ENCODE measurements at regions of chr5 and their contacts with region 1.

Region 1: GRCh38 chr5:139968547-139969261 is 74.4 kb downstream of the NRG2 start:
- DNase-seq: peak; percentile 88 to 91 (median 90)
- ATAC-seq: peak; percentile 100
- H3K4me3 ChIP-seq: no peak overlapping the region
- H3K27ac ChIP-seq: no peak overlapping the region
- H3K4me1 ChIP-seq: peaks cover 0 to 10% of the 10 kb centered on the region in 2 experiments; a peak in 1 of 5 replicates
- H3K27me3 ChIP-seq: peaks cover 0 to 30% of the 10 kb centered on the region in 2 experiments; a peak in 4 of 5 replicates
- CTCF ChIP-seq: peak; percentile 100
- EP300 ChIP-seq: no peak
- POLR2A ChIP-seq: no peak
- RAD21 ChIP-seq: peak; percentile 97 to 99

Region 2: GRCh38 chr5:139774980-139775661 is 193.6 kb before region 1 on chr5:
- CTCF ChIA-PET with region 1: interaction called, 12 read pairs
- POLR2A ChIA-PET with region 1: interaction called, 4 read pairs
- in situ Hi-C with region 1: no loop called
- intact Hi-C with region 1: no loop called
- DNase-seq: peak; percentile 88 to 94 (median 92)
- ATAC-seq: peak; percentile 98
- H3K4me3 ChIP-seq: no peak overlapping the region
- H3K27ac ChIP-seq: no peak overlapping the region
- H3K4me1 ChIP-seq: peaks cover 4 to 14% of the 10 kb centered on the region in 2 experiments; a peak in 4 of 5 replicates
- H3K27me3 ChIP-seq: peaks cover 2 to 17% of the 10 kb centered on the region in 2 experiments; a peak in 3 of 5 replicates
- CTCF ChIP-seq: peak; percentile 96 to 99 (median 98)
- EP300 ChIP-seq: 0 out of 2 replicates have a peak, but pooled peaks have one; percentile 22
- POLR2A ChIP-seq: no peak
- RAD21 ChIP-seq: peak; percentile 53 to 76

Region 3: DNA sequence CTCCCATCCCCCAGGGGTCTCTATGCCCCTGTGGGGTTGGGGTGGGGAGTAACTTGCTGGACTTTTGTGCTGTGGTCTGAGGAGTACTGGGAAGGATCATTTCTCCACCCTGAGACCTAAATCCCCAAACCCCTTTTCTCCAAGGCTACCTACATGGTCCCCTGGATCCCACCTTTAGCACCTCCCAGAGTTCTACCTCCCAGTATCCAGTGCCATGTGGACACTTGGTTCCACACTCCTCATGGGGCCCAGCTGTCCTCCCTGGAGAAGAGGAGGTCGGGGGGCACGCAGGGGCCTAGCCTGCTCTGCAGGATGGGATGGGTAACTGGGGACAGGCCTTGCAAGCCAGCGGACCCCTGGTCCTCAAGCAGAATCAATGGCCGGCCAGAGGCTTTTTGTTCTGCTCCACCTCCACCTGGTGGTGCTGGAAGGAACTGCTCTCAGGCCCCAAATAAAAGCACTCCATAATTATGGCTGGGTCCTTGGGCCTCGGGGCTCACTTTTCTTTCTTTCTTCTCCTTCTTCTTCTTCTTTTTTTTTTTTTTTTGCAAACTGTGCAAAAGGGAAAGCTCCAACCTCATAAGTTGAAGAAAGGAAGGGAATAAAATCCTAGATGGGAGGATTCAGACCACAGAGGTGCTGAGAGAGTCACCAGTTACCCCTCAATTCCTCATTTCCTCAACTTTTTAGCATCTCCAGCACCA is 104.7 kb before region 1 on chr5:
- CTCF ChIA-PET with region 1: interaction called, 7 read pairs
- POLR2A ChIA-PET with region 1: no interaction called
- in situ Hi-C with region 1: no loop called
- intact Hi-C with region 1: loop called (anchors 2 kb)
- DNase-seq: peak; percentile 69 to 77 (median 74)
- ATAC-seq: peak; percentile 91
- H3K4me3 ChIP-seq: no peak overlapping the region
- H3K27ac ChIP-seq: no peak overlapping the region
- H3K4me1 ChIP-seq: no peaks in the 10 kb centered on the region
- H3K27me3 ChIP-seq: peaks cover 0 to 29% of the 10 kb centered on the region in 2 experiments; a peak in 3 of 5 replicates
- CTCF ChIP-seq: peak; percentile 85 to 88 (median 86)
- EP300 ChIP-seq: no peak
- POLR2A ChIP-seq: no peak
- RAD21 ChIP-seq: peak; percentile 50 to 79

Region 4: GRCh38 chr5:139872052-139872766 is 96.5 kb before region 1 on chr5:
- CTCF ChIA-PET with region 1: interaction called, 11 read pairs
- POLR2A ChIA-PET with region 1: interaction called, 3 read pairs
- in situ Hi-C with region 1: no loop called
- intact Hi-C with region 1: no loop called
- DNase-seq: peak in 2 of 4 experiments; percentile 15 to 33
- ATAC-seq: peak; percentile 62
- H3K4me3 ChIP-seq: no peak overlapping the region
- H3K27ac ChIP-seq: no peak overlapping the region
- H3K4me1 ChIP-seq: no peaks in the 10 kb centered on the region
- H3K27me3 ChIP-seq: peaks cover 6 to 25% of the 10 kb centered on the region in 2 experiments; a peak in 2 of 5 replicates
- CTCF ChIP-seq: peak; percentile 22 to 41 (median 23); a peak in 5 of 6 replicates
- EP300 ChIP-seq: no peak
- POLR2A ChIP-seq: no peak
- RAD21 ChIP-seq: 0 out of 4 replicates have a peak, but pooled peaks of 1 of the 2 experiments have one; percentile 20

Region 5: GRCh38 chr5:140157032-140157803 is 188.5 kb after region 1 on chr5:
- CTCF ChIA-PET with region 1: interaction called, 6 read pairs
- POLR2A ChIA-PET with region 1: no interaction called
- in situ Hi-C with region 1: no loop called
- intact Hi-C with region 1: loop called (anchors 2 kb)
- DNase-seq: peak; percentile 90
- ATAC-seq: peak; percentile 97
- H3K4me3 ChIP-seq: no peak overlapping the region
- H3K27ac ChIP-seq: no peak overlapping the region
- H3K4me1 ChIP-seq: peaks cover 0 to 10% of the 10 kb centered on the region in 2 experiments; a peak in 2 of 5 replicates
- H3K27me3 ChIP-seq: peaks cover 0 to 4% of the 10 kb centered on the region in 2 experiments; a peak in 1 of 5 replicates
- CTCF ChIP-seq: peak; percentile 88 to 95 (median 94)
- EP300 ChIP-seq: no peak
- POLR2A ChIP-seq: no peak
- RAD21 ChIP-seq: peak; percentile 93 to 96

Measured in K562 (cell line).